ENCODE measurements at regions of chr17 and their contacts with region 1.

Region 1: DNA sequence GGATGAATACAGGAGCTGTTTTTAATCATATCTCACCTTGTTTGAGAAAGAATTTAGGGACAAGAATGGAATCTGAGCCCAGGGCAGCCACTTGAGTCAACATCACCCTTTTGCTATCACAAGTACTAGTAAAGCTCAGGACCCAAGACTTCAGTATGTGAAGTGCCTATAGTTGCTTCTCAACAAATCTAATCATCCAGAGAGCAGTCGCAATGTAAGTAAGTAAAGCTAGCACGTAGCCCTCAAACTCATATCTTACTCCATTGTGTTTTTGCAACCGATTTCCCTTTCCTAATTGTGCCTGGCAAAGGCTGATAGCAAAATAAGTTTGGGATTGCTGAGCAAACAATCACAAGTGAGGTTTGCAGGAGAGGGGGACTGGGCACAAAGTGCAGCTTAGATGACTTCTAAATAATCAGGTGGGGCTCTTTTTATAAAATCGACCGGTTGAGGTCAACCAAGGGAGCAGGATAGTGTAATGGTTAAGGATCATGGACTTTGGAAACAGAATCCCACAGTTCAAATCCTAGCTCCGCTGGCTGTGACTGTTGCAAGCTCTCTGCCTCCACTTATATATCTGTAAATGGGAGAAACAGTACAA is 13.0 kb downstream of the TOB1 start:
- DNase-seq: no peak
- H3K4me3 ChIP-seq: no peak overlapping the region
- H3K27me3 ChIP-seq: peaks cover 1% of the 10 kb centered on the region; the same call in 1 of the 2 replicates
- CTCF ChIP-seq: no peak

Region 2: DNA sequence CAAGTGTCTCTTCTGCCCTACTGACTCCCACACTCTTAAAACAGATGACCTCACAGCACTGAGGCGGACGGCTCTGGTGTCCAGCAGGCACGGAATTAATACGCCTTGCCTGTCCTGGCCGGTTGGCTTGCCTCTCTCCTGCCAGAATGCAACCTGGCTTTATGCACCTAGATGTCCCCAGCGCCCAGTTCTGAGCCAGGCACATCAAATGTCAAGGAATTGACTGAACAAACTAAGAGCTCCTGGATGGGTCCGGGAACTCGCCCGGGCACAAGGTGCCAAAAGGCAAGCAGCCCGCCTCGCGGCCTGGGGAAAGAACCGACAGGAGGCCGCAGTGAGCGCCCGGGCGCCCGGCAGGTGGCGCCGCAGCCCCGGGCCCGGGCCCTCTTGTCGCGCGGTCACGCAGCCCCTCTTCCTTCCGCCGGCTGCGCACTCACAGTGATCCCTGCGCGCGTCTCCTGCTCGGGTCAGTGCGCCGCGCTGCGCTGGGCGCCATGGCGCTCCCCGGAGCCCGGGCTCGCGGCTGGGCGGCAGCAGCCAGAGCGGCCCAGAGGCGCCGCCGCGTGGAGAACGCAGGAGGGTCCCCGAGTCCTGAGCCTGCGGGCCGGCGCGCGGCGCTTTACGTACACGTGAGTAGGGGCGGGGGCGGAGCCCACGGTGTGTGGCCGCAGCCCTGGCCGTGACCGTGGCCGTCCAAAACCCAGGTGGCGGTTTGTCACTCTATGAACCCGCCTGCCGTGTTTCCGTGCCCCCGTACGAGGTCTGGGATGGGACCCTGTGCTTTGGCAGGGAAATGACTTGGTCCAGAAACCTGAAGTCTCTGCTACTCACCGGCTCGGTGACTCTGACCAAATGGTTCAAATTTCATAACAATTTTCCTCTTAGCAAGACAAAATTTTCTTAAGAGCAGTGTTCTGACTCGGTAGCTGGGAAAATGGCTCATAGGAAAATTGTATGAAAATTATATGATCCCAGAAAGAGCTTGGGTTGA is 374.4 kb before region 1 on chr17 and contains the start of gene RSAD1:
- CTCF ChIA-PET with region 1: no interaction called
- POLR2A ChIA-PET with region 1: no interaction called
- DNase-seq: no peak
- H3K4me3 ChIP-seq: peak within 1 kb of the TSS; percentile 55
- H3K27me3 ChIP-seq: peaks cover 2% of the 10 kb centered on the region; the same call in 1 of the 2 replicates
- CTCF ChIP-seq: peak; percentile 53
- polyA plus RNA-seq, gene RSAD1: 17.5 and 22.6 TPM in 2 replicates

Region 3: DNA sequence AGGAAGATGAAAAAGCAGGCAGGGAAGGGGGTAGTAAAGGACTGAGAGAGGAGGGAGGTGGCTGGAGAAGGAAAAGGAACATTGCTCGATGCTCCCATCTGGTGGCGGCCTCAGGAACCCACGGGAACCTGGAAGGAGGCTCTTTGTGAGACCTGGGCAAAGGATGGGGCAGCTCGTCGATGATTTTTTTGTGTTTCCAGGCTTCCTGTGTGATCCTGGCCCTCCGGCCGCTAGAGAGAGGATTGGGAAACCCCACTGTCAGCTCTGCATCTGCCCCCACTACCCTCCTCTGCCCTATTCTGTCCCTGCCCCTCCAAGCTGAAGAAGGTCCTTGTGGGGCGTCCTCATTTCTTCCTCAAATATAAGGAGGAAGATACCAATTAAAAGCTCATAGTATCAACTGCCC is 11.2 kb before region 1 on chr17:
- CTCF ChIA-PET with region 1: interaction called, 26 read pairs
- POLR2A ChIA-PET with region 1: no interaction called
- DNase-seq: no peak
- H3K4me3 ChIP-seq: no peak overlapping the region
- H3K27me3 ChIP-seq: no peaks in the 10 kb centered on the region
- CTCF ChIP-seq: peak; percentile 87

Region 4: DNA sequence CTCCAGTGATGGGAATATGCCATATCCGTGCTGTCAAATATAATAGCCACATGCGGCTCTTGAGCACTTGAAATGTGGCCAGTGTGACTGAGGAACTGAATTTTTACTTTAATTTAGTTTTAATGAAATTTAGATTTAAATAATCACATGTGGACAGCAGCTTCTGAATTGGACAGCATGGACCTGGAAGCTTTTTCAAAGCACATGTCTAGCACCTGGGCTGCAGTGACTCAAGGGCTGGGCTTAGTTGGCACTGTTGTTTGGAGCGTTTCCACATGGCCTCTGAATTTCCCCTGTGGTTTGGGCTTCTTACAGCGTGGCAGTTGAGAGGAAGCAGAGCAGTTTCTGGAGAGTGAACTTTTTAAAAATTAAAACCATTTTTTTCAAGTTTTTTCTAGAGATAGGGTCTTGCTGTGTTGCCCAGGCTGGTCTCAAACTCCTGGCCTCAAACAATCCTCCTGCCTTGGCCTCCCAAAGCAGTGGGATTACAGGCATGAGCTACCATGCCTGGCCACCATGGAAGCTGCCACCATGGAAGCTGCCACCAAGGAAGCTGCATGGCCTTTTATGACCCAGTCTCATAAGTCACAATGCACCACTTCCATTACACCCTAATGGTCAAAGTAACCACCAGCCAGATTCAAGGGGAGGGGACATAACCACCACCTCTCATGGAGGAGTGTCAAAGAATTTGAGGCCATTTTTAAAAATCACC is 19.8 kb after region 1 on chr17:
- CTCF ChIA-PET with region 1: no interaction called
- POLR2A ChIA-PET with region 1: no interaction called
- DNase-seq: no peak
- H3K4me3 ChIP-seq: no peak overlapping the region
- H3K27me3 ChIP-seq: 0 out of 2 replicates have a peak, but pooled peaks cover 2% of the 10 kb centered on the region
- CTCF ChIP-seq: no peak

Region 5: GRCh38 chr17:50949989-50950881 is 97.1 kb after region 1 on chr17:
- CTCF ChIA-PET with region 1: interaction called, 294 read pairs
- POLR2A ChIA-PET with region 1: no interaction called
- DNase-seq: peak; percentile 71
- H3K4me3 ChIP-seq: no peak overlapping the region
- H3K27me3 ChIP-seq: no peaks in the 10 kb centered on the region
- CTCF ChIP-seq: peak; percentile 73

Region 6: GRCh38 chr17:50963139-50963538 is 110.0 kb after region 1 on chr17:
- CTCF ChIA-PET with region 1: interaction called, 294 read pairs
- POLR2A ChIA-PET with region 1: no interaction called
- DNase-seq: no peak
- H3K4me3 ChIP-seq: no peak overlapping the region
- H3K27me3 ChIP-seq: no peaks in the 10 kb centered on the region
- CTCF ChIP-seq: no peak

Region 7: DNA sequence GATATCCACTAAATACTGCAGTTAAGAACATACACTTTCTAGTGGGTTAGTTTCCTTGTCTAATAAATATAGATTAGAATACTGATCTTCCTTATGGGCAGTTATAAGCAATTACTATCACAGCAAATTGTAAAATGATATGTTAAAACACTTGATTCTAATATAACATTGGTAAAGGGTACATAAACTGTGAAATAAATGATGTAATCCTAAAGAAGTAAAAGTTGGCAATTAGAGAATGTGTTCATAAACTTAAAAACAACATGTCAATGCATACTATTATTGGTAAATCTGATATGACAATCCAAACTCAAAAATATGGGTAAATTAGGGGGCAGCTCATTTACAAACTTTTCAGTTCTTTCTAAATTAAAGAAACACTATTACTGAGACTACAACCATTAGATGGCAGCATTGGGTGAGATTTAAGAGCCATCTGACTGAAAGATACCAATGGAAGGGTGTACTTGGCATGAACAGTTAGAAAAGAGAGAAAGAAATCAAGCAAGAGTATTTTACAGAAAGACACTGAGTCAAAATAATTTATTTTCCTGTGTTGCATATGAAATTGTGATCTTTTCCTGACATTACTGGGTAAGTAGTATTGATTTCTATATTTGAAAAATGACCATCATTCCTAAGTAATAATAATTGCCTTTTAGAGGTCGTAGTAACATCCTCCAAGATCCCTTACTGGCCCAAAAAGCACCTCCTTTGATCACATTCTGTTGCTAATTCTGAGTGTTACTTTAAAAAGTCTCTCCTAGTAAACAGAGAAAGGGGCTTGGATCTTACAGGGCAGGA is 147.9 kb after region 1 on chr17:
- CTCF ChIA-PET with region 1: interaction called, 16 read pairs
- POLR2A ChIA-PET with region 1: no interaction called
- DNase-seq: no peak
- H3K4me3 ChIP-seq: no peak overlapping the region
- H3K27me3 ChIP-seq: no peaks in the 10 kb centered on the region
- CTCF ChIP-seq: peak; percentile 47

Region 8: DNA sequence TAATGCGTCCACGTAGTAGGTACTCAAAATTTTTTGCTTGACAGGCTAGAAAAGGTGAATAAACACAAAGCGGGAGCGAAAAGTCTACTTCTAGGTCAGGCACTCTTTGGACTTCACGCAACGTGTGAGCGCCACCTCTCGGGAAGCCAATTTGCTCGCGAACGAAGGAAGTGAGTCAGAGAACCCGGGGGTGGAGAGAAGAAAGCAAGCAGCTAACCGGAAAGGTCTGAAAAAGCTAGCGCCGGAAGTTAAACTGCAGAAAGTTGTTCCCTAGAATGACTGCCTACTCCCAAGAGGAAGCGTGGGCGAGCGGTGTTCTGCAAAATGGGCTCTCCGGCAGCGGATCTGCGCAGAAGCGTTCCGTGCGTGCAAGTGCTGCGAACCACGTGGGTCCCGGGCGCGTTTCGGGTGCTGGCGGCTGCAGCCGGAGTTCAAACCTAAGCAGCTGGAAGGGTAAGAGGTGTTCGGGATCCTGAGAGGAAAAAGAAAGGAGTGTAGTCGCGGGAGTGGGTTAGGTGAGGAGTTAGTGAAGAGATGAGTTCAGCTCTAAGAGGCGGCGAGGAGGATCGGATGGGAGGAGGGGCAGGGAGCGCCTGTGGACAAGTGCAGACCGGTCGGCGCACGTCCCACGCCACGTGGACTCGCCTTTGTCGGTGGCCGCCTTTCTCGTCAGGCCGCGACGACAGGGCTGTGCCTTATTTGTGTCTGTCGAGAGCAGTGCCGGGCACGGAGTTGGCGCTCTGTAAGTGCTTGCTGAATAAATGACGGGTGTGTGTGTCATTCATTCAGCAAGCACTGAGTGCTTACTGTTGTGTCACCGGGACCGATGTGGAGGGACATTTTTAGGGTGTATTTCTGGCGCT is 300.3 kb after region 1 on chr17 and contains the start of gene NME1:
- CTCF ChIA-PET with region 1: interaction called, 21 read pairs
- POLR2A ChIA-PET with region 1: no interaction called
- DNase-seq: peak; percentile 97
- H3K4me3 ChIP-seq: peak within 1 kb of the TSS; percentile 80
- H3K27me3 ChIP-seq: no peaks in the 10 kb centered on the region
- CTCF ChIP-seq: peak; percentile 85
- polyA plus RNA-seq, gene NME1: 178 and 261 TPM in 2 replicates